Naive thymus-derived CD4-positive, alpha-beta T cell (primary cell): ENCODE measurements at regions of chr10 and their contacts with region 1.

Region 1: DNA sequence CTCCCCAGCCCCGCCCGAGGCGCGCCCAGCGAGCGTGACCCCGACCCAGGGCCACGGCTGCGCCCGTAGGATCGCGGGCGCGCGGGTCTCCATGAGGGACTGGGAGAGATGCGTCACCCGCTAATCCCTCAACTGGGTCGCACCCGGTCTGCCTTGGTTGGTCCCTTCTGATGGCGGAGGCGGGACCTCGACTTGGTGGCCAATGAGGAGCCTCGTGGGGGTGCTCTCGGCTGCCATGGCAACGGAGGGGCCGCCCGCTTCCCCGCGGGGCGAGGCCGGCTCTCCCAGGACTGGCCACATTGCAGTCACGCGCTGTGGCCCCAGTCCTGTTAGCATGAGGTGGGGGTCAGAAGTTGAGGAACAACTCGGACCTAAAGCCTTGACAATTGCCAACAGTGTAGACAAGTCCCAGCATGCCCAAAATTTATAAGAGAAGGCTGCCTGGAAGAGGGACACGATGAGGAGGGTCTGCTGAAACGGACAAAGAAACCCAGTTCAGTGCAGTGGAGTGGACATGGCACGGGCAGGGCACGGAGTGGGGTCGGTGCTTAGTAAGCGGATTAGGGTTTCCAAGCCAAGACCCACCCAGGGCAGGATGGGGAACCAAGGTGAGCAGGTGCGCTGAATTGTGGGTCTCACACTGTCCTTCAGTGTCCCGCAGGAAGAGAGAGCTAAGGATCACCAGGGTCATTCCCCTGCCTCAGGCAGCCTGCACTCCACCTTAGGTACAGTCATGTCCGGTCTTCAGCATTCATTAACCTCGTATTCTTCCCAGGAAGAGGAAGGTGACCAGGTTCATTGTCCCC is 24.4 kb downstream of the DDIT4 start:
- DNase-seq: peak; percentile 68 to 90 (median 78)
- ATAC-seq: peak; percentile 76
- H3K4me3 ChIP-seq: peak overlapping the region; percentile 69
- H3K4me3 Mint-ChIP-seq: peak overlapping the region; percentile 27 to 89 (median 84)
- H3K27ac ChIP-seq: peak overlapping the region; percentile 80
- H3K27ac Mint-ChIP-seq: peak overlapping the region; percentile 97 to 100 (median 99)
- H3K4me1 ChIP-seq: peaks cover 29 to 30% of the 10 kb centered on the region in 2 donors
- H3K4me1 Mint-ChIP-seq: peaks cover 18 to 61% (median 55%) of the 10 kb centered on the region in 7 donors
- H3K27me3 ChIP-seq: no peaks in the 10 kb centered on the region
- H3K27me3 Mint-ChIP-seq: no peaks in the 10 kb centered on the region

Region 2: DNA sequence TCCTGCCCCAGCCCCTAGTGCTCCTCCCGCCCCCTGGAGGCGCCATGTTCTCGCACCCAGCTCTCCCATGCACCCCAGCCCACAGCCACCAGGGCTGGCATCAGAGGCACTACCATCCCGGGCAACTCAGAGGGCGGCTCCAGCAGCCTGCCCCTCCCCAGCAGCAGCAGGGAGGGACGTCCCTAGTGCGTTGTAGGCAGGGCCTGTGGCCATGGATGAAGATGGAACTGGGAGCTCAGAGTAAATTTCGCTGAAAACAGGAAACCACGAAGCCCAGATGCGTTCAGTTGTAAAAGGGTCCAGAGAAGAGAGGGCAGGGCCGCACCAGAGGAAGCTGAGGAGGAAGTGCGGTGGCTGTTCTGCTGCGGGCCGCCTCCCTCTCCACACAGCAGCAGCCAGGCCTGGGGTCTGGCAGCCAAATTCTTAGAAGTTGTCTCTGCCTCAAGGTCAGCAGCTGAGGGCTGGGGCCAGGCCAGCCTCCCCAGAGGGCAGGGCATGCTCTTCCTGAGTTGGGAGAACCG is 549.4 kb before region 1 on chr10:
- CTCF ChIA-PET with region 1: no interaction called
- POLR2A ChIA-PET with region 1: no interaction called
- intact Hi-C with region 1: loop called in 1 of 2 experiments (anchors 10 kb)
- DNase-seq: peak; percentile 53 to 93 (median 88)
- ATAC-seq: peak; percentile 87
- H3K4me3 ChIP-seq: peak overlapping the region; percentile 40
- H3K4me3 Mint-ChIP-seq: peak overlapping the region; percentile 74 to 90 (median 85)
- H3K27ac ChIP-seq: peak overlapping the region; percentile 74
- H3K27ac Mint-ChIP-seq: peak overlapping the region; percentile 95 to 99 (median 98)
- H3K4me1 ChIP-seq: peaks cover 93 to 99% of the 10 kb centered on the region in 2 donors
- H3K4me1 Mint-ChIP-seq: peaks cover 80 to 98% (median 93%) of the 10 kb centered on the region in 7 donors
- H3K27me3 ChIP-seq: no peaks in the 10 kb centered on the region
- H3K27me3 Mint-ChIP-seq: no peaks in the 10 kb centered on the region

Region 3: GRCh38 chr10:72260588-72261322 is 37.4 kb before region 1 on chr10:
- CTCF ChIA-PET with region 1: no interaction called
- POLR2A ChIA-PET with region 1: interaction called, 22 read pairs
- intact Hi-C with region 1: loop called (anchors 1 kb)
- DNase-seq: peak; percentile 55 to 89 (median 63)
- ATAC-seq: peak; percentile 85
- H3K4me3 ChIP-seq: peak overlapping the region; percentile 68
- H3K4me3 Mint-ChIP-seq: peak overlapping the region; percentile 83 to 93 (median 90)
- H3K27ac ChIP-seq: peak overlapping the region; percentile 78
- H3K27ac Mint-ChIP-seq: peak overlapping the region; percentile 87 to 97 (median 94)
- H3K4me1 ChIP-seq: peaks cover 45 to 63% of the 10 kb centered on the region in 2 donors
- H3K4me1 Mint-ChIP-seq: peaks cover 32 to 83% (median 67%) of the 10 kb centered on the region in 7 donors
- H3K27me3 ChIP-seq: no peaks in the 10 kb centered on the region
- H3K27me3 Mint-ChIP-seq: no peaks in the 10 kb centered on the region

Region 4: DNA sequence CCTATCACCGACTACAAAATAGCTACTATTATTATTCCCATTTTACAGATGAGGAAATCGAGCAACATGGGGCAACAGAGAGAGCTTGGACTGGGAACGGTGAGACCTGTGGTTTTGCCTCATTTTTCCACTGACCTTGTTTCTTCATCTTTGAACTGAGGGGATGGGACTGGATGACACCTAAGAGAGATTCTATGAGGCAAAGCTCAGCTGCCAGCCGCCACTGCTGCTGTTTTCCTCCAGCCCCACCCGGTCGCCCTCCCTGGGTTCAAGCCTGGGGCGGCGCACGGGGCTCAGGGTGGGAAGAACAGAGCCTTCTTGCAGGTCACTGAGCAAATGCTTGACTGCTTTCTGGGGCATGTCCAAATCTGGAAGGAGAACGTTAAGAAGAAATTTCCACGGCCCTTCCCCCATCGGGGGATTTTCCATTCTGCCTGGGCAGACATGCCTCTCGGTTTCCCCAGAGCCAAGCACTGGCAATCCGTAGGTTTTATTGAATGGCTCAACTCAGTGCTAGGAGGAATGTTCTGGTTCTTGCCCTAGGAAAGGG is 12.1 kb before region 1 on chr10:
- CTCF ChIA-PET with region 1: interaction called, 3 read pairs
- POLR2A ChIA-PET with region 1: interaction called, 14 read pairs
- intact Hi-C with region 1: loop called in 1 of 2 experiments (anchors 1 kb)
- DNase-seq: no peak
- ATAC-seq: no peak
- H3K4me3 ChIP-seq: no peak overlapping the region
- H3K4me3 Mint-ChIP-seq: peak overlapping the region in 5 of 10 donors; percentile 25 to 72 (median 63)
- H3K27ac ChIP-seq: peak overlapping the region; percentile 35
- H3K27ac Mint-ChIP-seq: peak overlapping the region; percentile 27 to 91 (median 81)
- H3K4me1 ChIP-seq: peaks cover 12 to 27% of the 10 kb centered on the region in 2 donors
- H3K4me1 Mint-ChIP-seq: peaks cover 24 to 50% (median 42%) of the 10 kb centered on the region in 7 donors
- H3K27me3 ChIP-seq: no peaks in the 10 kb centered on the region
- H3K27me3 Mint-ChIP-seq: no peaks in the 10 kb centered on the region

Region 5: GRCh38 chr10:72319416-72320254 is 21.5 kb after region 1 on chr10:
- CTCF ChIA-PET with region 1: interaction called, 6 read pairs
- POLR2A ChIA-PET with region 1: interaction called, 172 read pairs
- intact Hi-C with region 1: loop called (anchors 1 kb)
- DNase-seq: peak; percentile 82 to 90 (median 88)
- ATAC-seq: peak; percentile 85
- H3K4me3 ChIP-seq: peak overlapping the region; percentile 60
- H3K4me3 Mint-ChIP-seq: peak overlapping the region; percentile 69 to 89 (median 82)
- H3K27ac ChIP-seq: peak overlapping the region; percentile 94
- H3K27ac Mint-ChIP-seq: peak overlapping the region; percentile 90 to 98 (median 97)
- H3K4me1 ChIP-seq: peaks cover 61 to 90% of the 10 kb centered on the region in 2 donors
- H3K4me1 Mint-ChIP-seq: peaks cover 58 to 90% (median 83%) of the 10 kb centered on the region in 7 donors
- H3K27me3 ChIP-seq: no peaks in the 10 kb centered on the region
- H3K27me3 Mint-ChIP-seq: no peaks in the 10 kb centered on the region

Region 6: DNA sequence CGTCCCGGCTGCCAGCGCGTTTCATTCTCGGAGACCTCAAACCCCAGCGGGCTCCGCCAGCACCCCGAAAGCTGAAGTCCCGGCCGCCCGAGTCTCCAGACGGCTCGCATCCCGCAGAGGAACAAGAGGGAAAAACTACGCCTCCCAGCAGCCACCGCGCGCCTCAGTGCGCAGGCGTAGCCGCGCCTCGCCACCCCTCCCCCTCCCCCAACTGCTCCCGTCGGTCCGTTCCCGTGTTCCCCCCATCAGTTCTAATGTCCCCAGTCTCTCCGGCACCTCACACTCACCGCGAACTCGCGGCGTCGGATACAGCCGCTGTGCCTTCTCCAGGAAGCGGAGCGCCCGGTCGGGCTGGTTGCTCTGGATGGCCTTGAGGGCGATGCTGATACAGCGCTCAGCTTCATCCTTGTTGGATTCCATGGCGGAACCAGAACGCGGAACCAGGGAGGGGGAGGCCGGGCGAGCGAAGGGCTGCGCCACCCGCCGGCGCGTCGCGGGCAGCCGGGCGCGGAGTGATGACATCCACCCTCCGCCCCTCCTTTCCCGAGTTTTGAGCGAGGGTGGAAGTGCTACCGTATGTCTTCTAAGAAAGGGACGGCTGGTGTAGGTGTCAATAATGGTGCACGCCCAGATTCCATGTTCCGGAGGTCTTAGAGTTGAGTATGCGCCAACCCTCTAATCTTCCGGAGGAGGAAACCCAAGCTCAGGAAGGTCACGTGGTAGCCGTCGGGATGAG is 56.5 kb after region 1 on chr10 and contains the start of gene DNAJB12:
- CTCF ChIA-PET with region 1: no interaction called
- POLR2A ChIA-PET with region 1: no interaction called
- intact Hi-C with region 1: no loop called
- DNase-seq: peak; percentile 90 to 96 (median 94)
- ATAC-seq: peak; percentile 94
- H3K4me3 ChIP-seq: peak within 1 kb of the TSS; percentile 98
- H3K4me3 Mint-ChIP-seq: peak within 1 kb of the TSS; percentile 93 to 99 (median 96)
- H3K27ac ChIP-seq: peak within 1 kb of the TSS; percentile 88
- H3K27ac Mint-ChIP-seq: peak within 1 kb of the TSS; percentile 93 to 100 (median 97)
- H3K4me1 ChIP-seq: peaks cover 8 to 13% of the 10 kb centered on the region in 2 donors
- H3K4me1 Mint-ChIP-seq: peaks cover 31 to 59% (median 46%) of the 10 kb centered on the region in 7 donors
- H3K27me3 ChIP-seq: no peaks in the 10 kb centered on the region
- H3K27me3 Mint-ChIP-seq: no peaks in the 10 kb centered on the region
- total RNA-seq, gene DNAJB12: 24.6 to 40.5 (median 36.2) TPM